Left colon (tissue), 2 donors: ENCODE measurements at regions of chr11 and their contacts with region 1.

Region 1: DNA sequence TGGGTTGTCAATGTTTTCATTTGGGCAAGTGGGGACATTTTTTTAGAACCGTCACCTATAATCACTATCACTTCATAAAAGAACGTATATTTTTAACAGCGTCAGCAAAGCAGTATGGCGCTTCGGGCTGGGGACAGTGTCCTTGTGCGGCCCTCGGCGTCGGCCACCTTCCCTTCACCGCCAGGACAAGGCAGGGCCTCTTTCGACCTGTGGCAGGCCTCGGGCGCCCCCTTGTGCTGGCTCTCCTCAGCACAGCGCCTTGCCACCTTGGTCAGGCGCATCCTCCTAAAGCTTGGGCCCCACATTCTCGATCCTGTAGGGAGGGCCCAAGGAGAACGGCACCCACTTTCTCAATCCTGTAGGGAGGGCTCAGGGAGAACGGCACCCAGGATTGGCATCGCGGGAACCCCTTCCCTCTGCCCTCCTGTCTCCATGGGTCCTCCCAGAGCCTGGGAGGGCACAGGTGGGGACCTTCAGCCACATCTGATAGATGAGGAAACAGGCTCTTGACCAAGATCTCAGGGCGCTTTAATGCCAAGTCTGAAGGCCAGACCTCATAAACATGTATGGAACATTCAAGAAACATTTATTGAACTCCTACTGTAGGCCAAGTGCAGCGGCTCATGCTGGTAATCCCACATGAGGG is 11.5 kb upstream of the FADD start:
- DNase-seq: peak; percentile 52 to 87
- ATAC-seq: peak; percentile 91

Region 2: GRCh38 chr11:69683764-69684333 is 507.8 kb before region 1 on chr11:
- intact Hi-C with region 1: loop called in 1 of 2 experiments (anchors 5 kb)
- DNase-seq: peak in 1 of 2 donors; percentile 47
- ATAC-seq: peak; percentile 54

Region 3: GRCh38 chr11:69918938-69919650 is 272.5 kb before region 1 on chr11:
- intact Hi-C with region 1: loop called (anchors 5 kb)
- DNase-seq: peak; percentile 37 to 70
- ATAC-seq: peak; percentile 60

Region 4: DNA sequence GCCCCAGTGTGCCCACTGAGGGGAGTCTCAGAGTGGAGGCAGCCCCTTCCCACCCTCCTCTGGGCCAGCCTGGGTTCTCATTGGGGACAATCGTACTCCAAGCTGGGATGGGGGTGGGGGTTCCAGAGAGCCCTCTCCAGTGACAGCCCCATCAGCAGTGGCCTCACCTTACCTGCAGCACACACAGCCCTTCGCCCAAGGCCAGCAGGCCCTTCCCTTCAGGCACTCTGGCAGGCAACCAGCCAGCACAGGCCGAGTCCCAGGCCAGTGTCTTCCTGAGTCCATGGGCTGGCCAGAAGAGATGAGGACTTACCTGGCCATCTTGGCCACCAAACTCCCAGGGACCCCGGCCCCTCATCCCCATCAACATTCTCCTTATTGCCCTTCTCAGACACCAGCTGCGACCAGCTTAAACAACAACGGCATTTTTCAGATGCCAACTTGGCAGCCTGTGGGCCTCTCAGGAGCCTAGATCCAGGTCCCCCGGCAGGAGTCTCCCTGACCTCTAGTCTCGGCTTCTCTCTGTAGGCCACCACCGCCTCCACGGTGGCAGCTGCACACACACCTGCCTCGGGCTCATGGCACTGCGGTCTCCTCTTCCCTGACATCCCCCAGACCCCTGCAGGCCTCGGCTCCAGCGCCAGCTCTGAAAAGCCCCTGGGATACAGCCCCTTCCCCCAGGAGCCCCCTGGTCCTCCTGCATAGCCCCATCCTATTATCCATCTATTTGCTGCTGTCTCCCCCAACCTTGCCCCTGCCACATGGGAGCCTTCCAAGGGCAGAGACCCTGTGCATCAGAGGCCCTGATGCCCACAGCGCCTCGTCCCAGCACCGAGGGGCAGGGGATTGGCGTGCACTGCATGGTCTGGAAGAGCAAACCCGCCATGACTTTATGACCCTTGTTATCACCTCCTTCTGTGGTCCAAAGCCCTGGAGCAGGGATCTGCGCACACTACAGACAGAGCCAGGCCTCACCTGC is 261.2 kb before region 1 on chr11:
- intact Hi-C with region 1: no loop called
- DNase-seq: peak; percentile 1 to 16
- ATAC-seq: no peak